HEK293T (cell line): ENCODE measurements at regions of chr1 and their contacts with region 1.

Region 1: DNA sequence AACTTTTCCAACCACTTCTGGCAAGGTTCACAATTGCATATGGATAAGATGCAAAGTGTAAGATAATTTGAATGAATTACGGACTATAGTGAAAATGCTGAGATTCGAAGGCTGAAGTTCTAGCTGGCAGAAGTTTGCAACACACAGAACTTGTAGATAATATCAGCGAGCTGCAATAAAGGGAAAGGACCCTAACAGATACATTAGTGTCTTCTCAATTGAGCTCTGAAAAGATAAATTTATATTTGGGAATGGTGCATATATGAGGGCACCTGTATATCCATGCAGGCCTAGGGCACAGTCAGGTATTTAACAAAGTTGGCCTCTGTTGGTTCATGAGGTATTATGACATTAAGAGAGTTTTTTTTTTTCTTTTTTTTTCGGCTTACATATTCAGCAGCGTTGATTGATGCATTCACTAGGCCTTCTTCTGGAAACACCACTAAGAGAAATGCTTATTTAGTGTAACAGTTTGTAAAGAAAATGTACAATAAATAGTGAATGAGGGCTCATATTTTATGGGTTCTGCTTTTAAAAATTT is 2.2 kb downstream of the NFIA start:
- DNase-seq: no peak

Region 2: DNA sequence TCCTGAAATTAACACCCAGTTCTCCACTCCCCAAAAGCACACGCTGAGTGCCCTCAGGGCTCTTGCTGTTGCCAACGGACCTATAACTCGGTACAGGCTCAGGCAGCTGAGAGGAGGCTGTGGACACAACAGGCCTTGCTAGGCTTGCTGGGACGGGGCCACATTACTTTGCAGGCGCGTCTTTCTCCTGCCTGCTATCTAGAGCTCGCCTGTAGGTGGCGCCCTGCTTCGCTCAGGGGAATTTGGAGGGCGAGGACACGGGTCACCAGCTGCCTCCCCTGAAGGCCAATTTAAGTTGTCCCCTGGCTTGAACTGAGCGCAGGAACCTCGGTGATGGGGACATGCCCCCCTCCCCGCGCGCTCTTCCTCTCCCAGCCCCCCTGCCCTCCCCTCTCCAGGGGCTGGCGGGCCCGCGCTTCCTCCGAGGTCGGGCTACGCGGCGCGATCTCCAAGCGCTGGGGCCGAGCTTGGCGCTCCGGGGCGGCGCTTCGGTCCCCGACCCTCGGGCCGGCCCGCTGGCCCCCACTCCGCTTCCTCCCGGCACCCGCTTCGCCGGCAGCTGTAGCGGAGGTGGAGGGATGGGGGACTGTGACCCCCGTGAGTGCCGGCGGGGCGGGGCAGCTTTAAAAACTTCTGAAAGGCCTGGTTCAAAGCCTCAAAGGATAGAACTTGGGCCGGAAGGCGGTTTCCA is 34.6 kb before region 1 on chr1:
- CTCF ChIA-PET with region 1: interaction called, 11 read pairs
- POLR2A ChIA-PET with region 1: interaction called, 12 read pairs
- DNase-seq: peak; percentile 96